ENCODE measurements at regions of chr9 and their contacts with region 1.

Region 1: GRCh38 chr9:34178520-34179212 is at the start of gene UBAP1:
- DNase-seq: peak; percentile 98
- H3K4me3 Mint-ChIP-seq: peak within 1 kb of the TSS; percentile 94
- H3K27ac Mint-ChIP-seq: peak within 1 kb of the TSS; percentile 89
- H3K4me1 Mint-ChIP-seq: peaks cover 22% of the 10 kb centered on the region
- H3K27me3 Mint-ChIP-seq: no peaks in the 10 kb centered on the region
- total RNA-seq, gene UBAP1: 35.6 to 39.1 TPM

Region 2: GRCh38 chr9:33881635-33882034 is 297.0 kb before region 1 on chr9:
- CTCF ChIA-PET with region 1: no interaction called
- POLR2A ChIA-PET with region 1: no interaction called
- DNase-seq: no peak
- H3K4me3 Mint-ChIP-seq: no peak overlapping the region
- H3K27ac Mint-ChIP-seq: no peak overlapping the region
- H3K4me1 Mint-ChIP-seq: peaks cover 7% of the 10 kb centered on the region
- H3K27me3 Mint-ChIP-seq: no peaks in the 10 kb centered on the region

Region 3: GRCh38 chr9:34048923-34049697 is 129.6 kb before region 1 on chr9:
- CTCF ChIA-PET with region 1: no interaction called
- POLR2A ChIA-PET with region 1: interaction called, 12 read pairs
- DNase-seq: peak; percentile 97
- H3K4me3 Mint-ChIP-seq: peak overlapping the region; percentile 89
- H3K27ac Mint-ChIP-seq: peak overlapping the region; percentile 97
- H3K4me1 Mint-ChIP-seq: peaks cover 58% of the 10 kb centered on the region
- H3K27me3 Mint-ChIP-seq: no peaks in the 10 kb centered on the region

Region 4: GRCh38 chr9:34126207-34127034 is 52.2 kb before region 1 on chr9 and contains the start of gene DCAF12:
- CTCF ChIA-PET with region 1: interaction called, 4 read pairs
- POLR2A ChIA-PET with region 1: interaction called, 13 read pairs
- DNase-seq: peak; percentile 92
- H3K4me3 Mint-ChIP-seq: peak within 1 kb of the TSS; percentile 89
- H3K27ac Mint-ChIP-seq: peak within 1 kb of the TSS; percentile 92
- H3K4me1 Mint-ChIP-seq: peaks cover 39% of the 10 kb centered on the region
- H3K27me3 Mint-ChIP-seq: no peaks in the 10 kb centered on the region
- total RNA-seq, gene DCAF12: 44.1 to 46.9 TPM

Region 5: GRCh38 chr9:34190996-34191892 is 12.6 kb after region 1 on chr9:
- CTCF ChIA-PET with region 1: interaction called, 3 read pairs
- POLR2A ChIA-PET with region 1: interaction called, 26 read pairs
- DNase-seq: no peak
- H3K4me3 Mint-ChIP-seq: no peak overlapping the region
- H3K27ac Mint-ChIP-seq: no peak overlapping the region
- H3K4me1 Mint-ChIP-seq: peaks cover 40% of the 10 kb centered on the region
- H3K27me3 Mint-ChIP-seq: no peaks in the 10 kb centered on the region

Region 6: GRCh38 chr9:34203275-34203991 is 24.8 kb after region 1 on chr9:
- CTCF ChIA-PET with region 1: interaction called, 7 read pairs
- POLR2A ChIA-PET with region 1: interaction called, 10 read pairs
- DNase-seq: no peak
- H3K4me3 Mint-ChIP-seq: no peak overlapping the region
- H3K27ac Mint-ChIP-seq: no peak overlapping the region
- H3K4me1 Mint-ChIP-seq: peaks cover 36% of the 10 kb centered on the region
- H3K27me3 Mint-ChIP-seq: no peaks in the 10 kb centered on the region

Region 7: DNA sequence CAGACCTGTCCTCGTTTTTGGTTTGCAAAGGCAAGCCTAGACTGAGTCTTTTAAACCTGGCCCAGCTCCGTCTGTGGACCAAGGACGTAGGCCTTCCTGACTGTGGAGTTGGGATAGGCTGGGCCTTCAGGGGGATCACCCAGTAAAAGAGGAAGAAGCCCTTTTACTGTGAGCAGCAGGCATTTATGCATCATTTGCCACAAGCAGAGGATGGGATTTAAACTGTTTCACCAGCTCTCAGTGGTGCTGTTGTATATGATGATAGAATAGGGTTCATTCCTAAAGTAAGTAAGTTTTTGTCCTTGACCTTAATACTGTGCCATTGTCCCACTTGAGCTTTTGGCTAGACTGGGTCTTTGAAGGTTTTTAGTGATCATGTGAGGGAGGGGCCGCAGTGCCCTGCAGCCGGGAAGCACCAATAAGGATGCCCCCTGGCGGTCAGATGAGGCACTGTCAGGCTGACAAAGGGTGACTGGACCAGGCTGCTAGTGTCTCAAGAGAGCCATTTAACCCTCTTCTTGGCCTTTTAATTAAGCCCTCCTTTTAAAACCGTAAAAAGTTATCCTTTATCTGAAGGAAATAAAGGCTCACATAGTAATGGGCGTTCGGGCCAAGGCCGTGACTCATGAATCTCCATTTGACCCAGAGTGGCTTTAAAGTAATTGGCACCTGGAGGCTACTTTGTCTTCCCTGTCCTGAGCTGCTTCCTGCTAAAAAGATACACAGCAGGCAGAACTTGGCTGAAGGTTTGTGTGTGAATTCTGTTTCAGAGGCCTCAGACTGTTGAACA is 74.2 kb after region 1 on chr9:
- CTCF ChIA-PET with region 1: interaction called, 11 read pairs
- POLR2A ChIA-PET with region 1: interaction called, 8 read pairs
- DNase-seq: peak; percentile 68
- H3K4me3 Mint-ChIP-seq: no peak overlapping the region
- H3K27ac Mint-ChIP-seq: no peak overlapping the region
- H3K4me1 Mint-ChIP-seq: no peaks in the 10 kb centered on the region
- H3K27me3 Mint-ChIP-seq: no peaks in the 10 kb centered on the region

Measured in activated CD4-positive, alpha-beta memory T cell treated with anti-CD3 and anti-CD28 coated beads, Interleukin-2, amount 10 ng/mL, durations not matched to agents 7 days and 5 days (primary cell).